GM10248 (cell line): ENCODE measurements at regions of chr16 and their contacts with region 1.

Region 1: DNA sequence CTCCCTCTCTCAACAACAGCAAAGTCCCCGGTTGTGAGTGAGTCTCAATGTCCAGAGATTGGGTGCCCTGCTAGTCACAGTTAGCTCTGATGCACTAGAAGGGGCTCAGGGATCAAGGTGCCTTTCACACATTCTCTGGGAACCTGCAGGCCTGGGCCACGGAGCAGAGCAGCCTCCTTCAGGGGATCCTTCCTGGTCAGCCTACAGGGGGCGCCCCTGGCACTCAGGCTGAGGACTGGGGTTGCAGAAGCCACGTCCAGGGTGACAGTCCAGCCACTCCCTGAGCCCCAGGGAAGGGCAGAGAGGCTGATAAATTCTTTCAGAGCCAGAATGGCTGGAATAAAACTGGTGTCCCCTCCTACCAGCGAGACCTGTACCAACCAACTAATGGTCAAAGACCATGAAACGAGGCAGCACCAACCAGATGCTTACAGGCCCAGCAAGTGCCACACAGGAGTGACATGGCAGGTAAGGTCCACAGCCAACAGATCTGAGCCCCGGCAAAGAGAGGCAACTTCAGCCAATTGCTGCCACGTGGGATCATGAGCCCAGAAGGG is 43.5 kb downstream of the ST3GAL2 start:
- DNase-seq: peak; percentile 84
- CTCF ChIP-seq: peak; percentile 86

Region 2: GRCh38 chr16:70380861-70381603 is 14.4 kb before region 1 on chr16:
- CTCF ChIA-PET with region 1: interaction called, 24 read pairs
- POLR2A ChIA-PET with region 1: interaction called, 3 read pairs
- DNase-seq: peak; percentile 96
- CTCF ChIP-seq: peak; percentile 33

Region 3: DNA sequence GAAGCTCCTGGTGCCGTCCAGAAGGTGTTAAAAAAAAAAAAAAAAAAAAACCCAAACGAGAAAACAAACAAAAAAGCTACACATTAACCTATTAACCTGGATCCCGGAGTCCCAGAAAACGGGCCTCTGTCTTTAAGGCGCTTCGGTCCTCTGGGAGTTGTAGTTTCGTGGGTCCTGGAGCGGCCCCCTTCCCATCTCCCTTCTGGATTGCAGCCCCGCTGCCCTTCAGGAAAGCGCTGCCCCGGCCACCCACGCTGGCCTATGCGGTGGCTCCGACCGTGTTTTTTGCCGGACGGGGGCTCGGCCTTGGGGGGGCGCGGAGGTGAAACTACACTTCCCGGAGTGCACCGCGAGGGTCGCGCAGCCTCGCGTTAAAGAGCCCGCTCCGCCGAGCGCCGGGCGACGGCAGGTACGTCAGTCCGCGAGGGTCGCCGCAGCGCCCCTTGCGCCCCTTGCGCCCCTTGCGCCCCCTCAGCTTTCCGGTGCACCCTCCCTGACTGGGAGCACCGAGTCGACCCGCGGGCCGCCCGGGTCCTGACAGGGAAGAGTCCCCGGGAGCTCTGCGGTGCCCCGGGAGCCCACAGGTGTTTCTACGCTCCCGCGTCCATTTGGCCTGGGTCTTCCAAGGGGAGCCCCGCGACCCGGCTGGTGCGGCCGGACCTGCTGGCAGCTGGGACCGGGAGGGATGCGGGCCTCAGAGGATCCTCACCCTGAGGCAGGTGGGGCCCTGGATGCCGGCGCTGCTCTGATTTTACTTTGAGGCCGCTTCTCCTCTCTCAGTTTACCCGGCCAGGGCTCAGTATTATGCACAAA is 59.0 kb after region 1 on chr16 and contains the start of gene FCSK:
- CTCF ChIA-PET with region 1: interaction called, 11 read pairs
- POLR2A ChIA-PET with region 1: no interaction called
- DNase-seq: peak; percentile 87
- CTCF ChIP-seq: peak; percentile 23

Region 4: GRCh38 chr16:70467113-70468034 is 72.0 kb after region 1 on chr16:
- CTCF ChIA-PET with region 1: interaction called, 11 read pairs
- POLR2A ChIA-PET with region 1: no interaction called
- DNase-seq: no peak
- CTCF ChIP-seq: no peak